ENCODE measurements at regions of chr17 and their contacts with region 1.

Region 1: DNA sequence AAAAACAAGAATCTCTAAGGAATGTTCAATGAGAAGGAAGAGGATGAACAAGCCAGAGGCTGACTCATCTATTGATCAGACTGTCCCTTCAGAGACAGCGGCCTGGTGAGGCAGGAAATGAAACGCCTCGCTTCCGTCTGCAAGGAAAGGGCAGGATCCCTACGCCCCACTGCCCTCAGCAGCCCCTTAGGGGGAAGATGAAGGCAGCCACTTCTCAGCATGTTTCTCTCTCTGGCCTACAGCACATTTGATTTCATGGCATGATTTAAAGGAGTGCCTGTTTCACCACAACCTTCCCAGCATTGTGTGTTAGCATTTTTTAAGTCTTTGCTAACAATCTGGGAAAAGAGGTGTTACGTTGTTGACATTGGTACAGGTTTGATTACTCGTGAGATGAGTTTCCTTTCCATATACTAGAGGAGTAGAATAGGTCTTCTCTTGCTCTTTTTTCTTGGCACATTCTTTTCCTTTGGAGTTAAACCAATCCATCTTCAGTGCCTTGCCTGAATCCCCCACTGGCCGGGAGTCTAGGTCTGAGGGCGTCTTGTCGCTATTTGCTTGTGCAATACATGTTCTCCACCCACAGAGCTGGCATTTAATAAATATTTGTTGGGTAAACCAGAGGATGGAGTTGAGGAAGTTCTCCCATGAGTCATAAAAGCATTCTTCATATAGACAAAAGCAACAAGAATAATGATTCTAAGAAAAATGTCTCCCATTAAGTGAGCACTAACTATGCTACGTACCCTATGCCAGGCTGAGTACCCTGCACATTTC is 47.4 kb downstream of the RBFOX3 start:
- DNase-seq: no peak
- H3K4me3 ChIP-seq: no peak overlapping the region
- H3K27ac ChIP-seq: no peak overlapping the region
- H3K4me1 ChIP-seq: no peaks in the 10 kb centered on the region
- H3K27me3 ChIP-seq: peaks cover 84% of the 10 kb centered on the region
- CTCF ChIP-seq: no peak

Region 2: GRCh38 chr17:79606487-79607281 is 43.3 kb after region 1 on chr17:
- CTCF ChIA-PET with region 1: interaction called, 10 read pairs
- POLR2A ChIA-PET with region 1: no interaction called
- intact Hi-C with region 1: no loop called
- DNase-seq: no peak
- H3K4me3 ChIP-seq: no peak overlapping the region
- H3K27ac ChIP-seq: no peak overlapping the region
- H3K4me1 ChIP-seq: no peaks in the 10 kb centered on the region
- H3K27me3 ChIP-seq: peaks cover 100% of the 10 kb centered on the region
- CTCF ChIP-seq: no peak

Measured in A673 (cell line).